ENCODE measurements at regions of chr6 and their contacts with region 1.

Region 1: GRCh38 chr6:37018198-37019064 is 13.0 kb downstream of the FGD2 start:
- DNase-seq: peak; percentile 97
- ATAC-seq: peak; percentile 95
- H3K4me3 Mint-ChIP-seq: no peak overlapping the region
- H3K27ac Mint-ChIP-seq: peak overlapping the region; percentile 61
- H3K4me1 Mint-ChIP-seq: peaks cover 45% of the 10 kb centered on the region
- H3K27me3 Mint-ChIP-seq: no peaks in the 10 kb centered on the region

Region 2: DNA sequence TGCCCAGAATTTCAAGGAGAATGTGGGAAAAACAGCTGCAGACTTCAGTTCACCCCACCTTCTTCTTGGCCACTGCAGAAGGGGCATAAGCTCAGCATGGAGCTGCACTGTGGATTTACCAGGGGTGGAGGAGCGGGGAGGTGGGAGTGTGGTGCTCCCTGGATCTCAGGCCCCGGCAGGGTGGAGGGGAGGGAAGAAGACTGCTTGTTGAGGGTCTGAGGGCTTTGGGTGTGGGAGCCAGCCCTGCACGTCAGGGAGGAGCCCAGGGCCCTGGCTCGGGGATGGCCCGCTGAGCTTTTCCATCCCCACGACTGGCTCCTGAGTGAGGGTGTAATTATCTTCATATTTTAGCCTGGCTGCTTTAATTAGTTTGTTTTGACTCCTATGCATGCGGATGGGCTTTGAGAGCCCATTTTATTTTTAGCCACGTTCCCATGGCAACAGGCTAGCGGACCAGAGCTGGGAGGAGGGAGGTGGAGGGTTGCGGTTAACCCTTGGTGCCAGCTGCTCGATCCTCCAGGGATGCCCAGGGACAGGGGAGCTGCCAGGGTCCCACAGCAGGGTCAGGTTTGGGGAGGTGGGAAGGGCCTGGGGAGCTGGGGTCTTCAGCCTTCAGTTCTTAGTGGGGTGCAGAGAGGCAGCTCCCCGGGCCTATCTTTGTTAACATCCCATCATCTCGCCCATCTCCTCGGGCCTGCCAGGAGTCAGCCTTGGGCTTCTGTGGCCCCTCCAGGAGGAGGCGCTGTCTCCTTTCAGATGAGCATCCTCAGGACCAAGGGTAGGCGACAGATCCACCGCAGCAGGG is 252.6 kb before region 1 on chr6:
- CTCF ChIA-PET with region 1: interaction called, 73 read pairs
- POLR2A ChIA-PET with region 1: no interaction called
- intact Hi-C with region 1: loop called (anchors 1 kb)
- DNase-seq: peak; percentile 92
- ATAC-seq: peak; percentile 92
- H3K4me3 Mint-ChIP-seq: no peak overlapping the region
- H3K27ac Mint-ChIP-seq: no peak overlapping the region
- H3K4me1 Mint-ChIP-seq: peaks cover 26% of the 10 kb centered on the region
- H3K27me3 Mint-ChIP-seq: no peaks in the 10 kb centered on the region

Region 3: GRCh38 chr6:36897609-36898008 is 120.8 kb before region 1 on chr6:
- CTCF ChIA-PET with region 1: interaction called, 15 read pairs
- POLR2A ChIA-PET with region 1: no interaction called
- intact Hi-C with region 1: no loop called
- DNase-seq: peak; percentile 49
- ATAC-seq: peak; percentile 69
- H3K4me3 Mint-ChIP-seq: no peak overlapping the region
- H3K27ac Mint-ChIP-seq: no peak overlapping the region
- H3K4me1 Mint-ChIP-seq: peaks cover 11% of the 10 kb centered on the region
- H3K27me3 Mint-ChIP-seq: no peaks in the 10 kb centered on the region

Region 4: DNA sequence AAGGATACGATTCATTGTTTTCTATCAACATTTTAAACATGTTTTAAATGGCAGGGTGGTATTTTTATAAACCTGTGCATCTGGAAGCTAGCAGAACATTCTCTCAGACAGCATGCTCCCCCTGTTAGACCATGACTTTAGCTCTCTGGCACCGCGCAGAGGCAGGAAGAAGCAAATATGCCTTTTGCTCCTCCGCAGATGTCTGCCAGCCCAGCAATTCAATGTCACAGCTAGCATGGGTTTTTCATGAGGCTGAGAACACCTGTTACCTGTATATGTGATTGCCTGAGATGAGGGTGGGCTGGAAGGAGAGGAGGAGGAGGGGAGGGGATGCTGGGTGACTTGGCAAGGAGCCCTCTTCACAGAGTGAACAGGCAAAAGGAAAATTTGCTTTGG is 39.1 kb before region 1 on chr6:
- CTCF ChIA-PET with region 1: interaction called, 19 read pairs
- POLR2A ChIA-PET with region 1: no interaction called
- intact Hi-C with region 1: no loop called
- DNase-seq: peak; percentile 65
- ATAC-seq: peak; percentile 78
- H3K4me3 Mint-ChIP-seq: no peak overlapping the region
- H3K27ac Mint-ChIP-seq: peak overlapping the region; percentile 55
- H3K4me1 Mint-ChIP-seq: peaks cover 31% of the 10 kb centered on the region
- H3K27me3 Mint-ChIP-seq: no peaks in the 10 kb centered on the region

Region 5: GRCh38 chr6:37029249-37029971 is 11.0 kb after region 1 on chr6:
- CTCF ChIA-PET with region 1: interaction called, 76 read pairs
- POLR2A ChIA-PET with region 1: no interaction called
- intact Hi-C with region 1: no loop called
- DNase-seq: peak; percentile 68
- ATAC-seq: peak; percentile 17
- H3K4me3 Mint-ChIP-seq: no peak overlapping the region
- H3K27ac Mint-ChIP-seq: peak overlapping the region; percentile 60
- H3K4me1 Mint-ChIP-seq: peaks cover 54% of the 10 kb centered on the region
- H3K27me3 Mint-ChIP-seq: no peaks in the 10 kb centered on the region

Region 6: DNA sequence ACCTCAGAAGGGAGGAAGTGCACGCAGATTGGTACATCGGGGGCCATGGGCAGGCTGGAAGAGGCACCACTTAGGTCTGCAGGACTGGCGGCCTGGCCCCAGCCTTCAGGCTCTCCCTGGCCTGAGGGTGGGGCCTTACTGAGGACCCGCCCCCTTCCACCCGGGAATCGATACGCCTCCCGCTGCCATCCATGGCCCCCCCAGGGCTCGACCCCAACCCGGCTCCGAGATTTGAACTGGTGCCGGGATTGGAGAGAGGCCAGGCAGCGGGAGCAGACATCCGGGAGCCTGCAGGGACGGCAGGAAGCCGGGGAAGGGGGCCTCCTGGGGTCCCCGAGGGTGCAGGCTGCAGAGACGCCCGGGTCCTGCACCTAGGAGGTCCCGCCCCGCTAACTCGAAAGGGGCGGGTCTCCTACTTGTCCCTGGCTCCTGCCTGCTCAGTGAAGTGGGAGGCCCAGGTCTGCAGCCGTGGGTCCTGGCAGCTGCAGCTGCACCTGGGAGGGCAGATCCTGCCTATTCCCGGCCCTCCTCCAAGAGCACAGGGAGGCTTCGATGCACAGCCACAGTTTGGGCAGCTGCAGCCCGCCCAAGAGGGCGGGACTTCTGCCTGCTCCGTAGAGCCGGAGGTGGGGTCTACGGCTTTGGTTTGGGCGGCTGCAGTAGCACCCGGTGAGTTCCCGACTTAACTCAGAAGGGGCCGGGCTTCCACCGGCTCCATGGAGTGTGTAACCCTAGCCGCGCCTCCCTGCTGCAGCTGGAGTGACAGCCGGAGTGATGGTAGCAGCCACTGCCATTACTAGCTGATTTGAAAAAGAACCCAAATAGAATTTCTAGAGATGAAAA is 203.9 kb after region 1 on chr6:
- CTCF ChIA-PET with region 1: interaction called, 586 read pairs
- POLR2A ChIA-PET with region 1: no interaction called
- intact Hi-C with region 1: no loop called
- DNase-seq: peak; percentile 89
- ATAC-seq: peak; percentile 99
- H3K4me3 Mint-ChIP-seq: peak overlapping the region; percentile 67
- H3K27ac Mint-ChIP-seq: peak overlapping the region; percentile 63
- H3K4me1 Mint-ChIP-seq: peaks cover 15% of the 10 kb centered on the region
- H3K27me3 Mint-ChIP-seq: no peaks in the 10 kb centered on the region

Measured in activated CD4-positive, alpha-beta T cell treated with anti-CD3 and anti-CD28 coated beads for 36 hours (primary cell).